Right cardiac atrium (tissue), 5 donors: ENCODE measurements at regions of chr15 and their contacts with region 1.

Region 1: GRCh38 chr15:40274350-40275274 is 8.3 kb downstream of the ANKRD63 start:
- DNase-seq: peak; percentile 77 to 92 (median 90)
- ATAC-seq: peak; percentile 15 to 47
- H3K4me3 ChIP-seq: no peak overlapping the region
- H3K27ac ChIP-seq: no peak overlapping the region
- H3K4me1 ChIP-seq: no peaks in the 10 kb centered on the region
- H3K27me3 ChIP-seq: no peaks in the 10 kb centered on the region

Region 2: DNA sequence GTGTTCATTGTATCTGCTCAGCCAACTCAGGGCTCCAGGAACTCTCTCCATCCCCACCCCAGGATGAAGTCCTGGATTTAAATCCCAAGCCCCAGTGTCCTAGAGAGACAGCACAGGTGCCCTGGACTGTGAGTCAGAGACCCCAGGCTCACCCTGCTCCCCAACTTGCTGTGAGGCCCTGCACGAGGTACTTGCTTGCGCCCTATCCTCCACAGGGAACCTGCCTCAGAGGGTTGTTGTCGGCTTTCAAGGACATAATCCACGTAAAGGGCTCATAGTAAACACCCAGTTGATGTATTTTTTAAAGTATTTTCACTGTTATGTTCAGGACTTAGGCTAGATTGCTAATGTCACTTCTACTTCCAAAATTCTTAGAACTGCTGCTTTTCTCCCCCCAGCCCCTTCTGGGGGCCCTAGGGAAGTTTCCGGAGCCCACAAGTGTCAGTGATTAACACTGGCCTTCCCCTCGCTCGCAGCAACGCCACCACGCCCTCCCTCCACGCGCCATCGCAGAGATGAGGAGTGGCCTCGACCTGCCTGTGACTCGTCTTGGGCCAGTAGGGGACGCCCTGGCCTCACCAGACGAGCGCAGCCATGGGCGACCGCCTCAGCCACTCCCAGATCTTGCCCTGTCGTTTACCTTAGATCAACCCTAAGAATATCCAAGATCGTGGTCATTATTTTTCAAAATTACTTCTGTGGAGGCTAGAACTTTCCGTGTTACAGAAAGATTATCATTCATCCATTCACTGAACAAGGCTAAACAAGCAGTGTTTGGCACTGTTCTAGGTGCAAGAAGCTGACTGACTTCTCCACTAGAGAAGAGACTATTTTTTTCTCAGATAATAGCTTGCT is 229.7 kb before region 1 on chr15:
- intact Hi-C with region 1: loop called (anchors 2 to 10 kb)
- DNase-seq: peak; percentile 91 to 96 (median 96)
- ATAC-seq: peak; percentile 91 to 95
- H3K4me3 ChIP-seq: no peak overlapping the region
- H3K27ac ChIP-seq: no peak overlapping the region
- H3K4me1 ChIP-seq: peaks cover 9% of the 10 kb centered on the region
- H3K27me3 ChIP-seq: no peaks in the 10 kb centered on the region

Region 3: GRCh38 chr15:40069178-40070165 is 205.1 kb before region 1 on chr15:
- intact Hi-C with region 1: no loop called
- DNase-seq: peak; percentile 93 to 98 (median 97)
- ATAC-seq: peak; percentile 94 to 95
- H3K4me3 ChIP-seq: no peak overlapping the region
- H3K27ac ChIP-seq: peak overlapping the region; percentile 28
- H3K4me1 ChIP-seq: peaks cover 6% of the 10 kb centered on the region
- H3K27me3 ChIP-seq: no peaks in the 10 kb centered on the region

Region 4: DNA sequence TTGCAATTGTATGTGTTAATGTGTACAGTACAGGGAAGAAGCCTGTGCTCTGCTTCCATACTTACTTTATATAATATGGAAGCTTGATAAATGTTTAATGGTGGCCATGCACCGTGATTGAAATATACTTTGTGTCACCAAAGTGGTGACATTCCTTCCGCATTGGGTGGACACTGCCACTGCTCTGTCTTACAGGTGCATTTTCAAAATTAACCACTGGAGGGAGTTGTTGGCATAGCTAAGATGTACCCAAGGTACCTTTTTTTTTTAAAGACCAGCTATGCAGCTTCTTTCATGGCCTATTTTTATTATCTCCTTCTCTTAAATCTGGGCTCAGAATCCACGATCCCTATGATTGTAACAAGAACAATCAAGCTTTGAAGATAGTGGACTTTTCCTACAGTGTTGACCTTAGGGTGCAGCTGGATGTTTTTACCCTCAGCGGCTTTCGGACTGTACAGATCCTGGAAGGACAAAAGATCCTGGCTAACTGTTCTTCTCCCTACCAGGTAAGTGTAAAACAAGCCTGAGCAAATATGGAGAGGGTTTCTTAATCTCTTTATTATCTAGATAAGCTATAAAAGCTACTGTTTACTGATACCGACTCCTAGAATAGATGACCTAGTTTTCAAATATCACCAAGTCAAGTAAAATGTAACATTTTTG is 57.3 kb before region 1 on chr15:
- intact Hi-C with region 1: loop called (anchors 1 to 2 kb)
- DNase-seq: no peak
- ATAC-seq: peak; percentile 88 to 90
- H3K4me3 ChIP-seq: no peak overlapping the region
- H3K27ac ChIP-seq: no peak overlapping the region
- H3K4me1 ChIP-seq: no peaks in the 10 kb centered on the region
- H3K27me3 ChIP-seq: no peaks in the 10 kb centered on the region

Region 5: DNA sequence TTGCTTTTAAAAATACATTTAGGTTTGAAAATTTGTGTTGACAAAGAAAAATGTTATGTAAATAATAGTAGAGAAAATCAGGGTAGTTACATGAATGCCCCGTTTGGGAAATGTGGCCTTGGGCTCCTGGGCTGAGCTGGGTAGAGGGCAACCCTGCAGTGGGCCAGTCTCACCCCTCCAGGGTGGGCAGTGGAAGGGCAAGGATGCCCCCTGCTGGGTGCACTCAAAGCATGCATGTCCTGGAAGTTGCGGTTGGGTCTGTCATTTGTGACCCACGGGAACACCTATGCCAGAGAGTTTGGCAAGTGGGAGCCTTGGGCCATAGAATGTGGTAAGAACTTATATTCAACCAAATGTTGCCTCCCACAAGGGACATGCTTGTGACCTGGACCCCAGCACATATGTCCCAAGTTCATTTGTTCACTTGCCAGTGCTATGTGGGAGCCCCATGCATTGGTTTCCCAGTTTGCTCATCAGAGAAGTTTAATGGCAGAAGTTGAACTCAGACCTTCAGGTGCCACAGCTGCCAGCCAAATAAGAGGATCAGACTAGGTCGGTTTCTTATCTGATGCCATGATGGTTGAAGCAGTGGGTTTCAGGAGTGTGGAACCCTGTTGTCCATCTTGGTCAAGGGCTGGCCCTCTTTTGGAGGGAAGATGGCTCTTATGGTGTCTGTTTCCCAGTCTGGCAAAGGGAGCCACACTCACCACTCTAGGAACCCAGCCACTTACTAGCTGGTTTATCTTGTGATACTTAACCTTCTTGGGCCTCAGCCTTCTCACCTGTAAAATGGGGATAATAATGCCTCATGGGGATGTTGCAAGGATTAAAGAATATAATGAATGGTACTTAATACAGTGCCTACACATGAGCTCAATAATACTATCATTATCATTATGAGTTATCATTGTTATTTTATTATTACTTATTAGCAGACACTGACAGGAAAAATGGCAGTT is 35.7 kb after region 1 on chr15:
- intact Hi-C with region 1: loop called in 3 of 4 experiments (anchors 2 to 5 kb)
- DNase-seq: peak; percentile 61 to 87 (median 82)
- ATAC-seq: peak; percentile 70
- H3K4me3 ChIP-seq: no peak overlapping the region
- H3K27ac ChIP-seq: no peak overlapping the region
- H3K4me1 ChIP-seq: no peaks in the 10 kb centered on the region
- H3K27me3 ChIP-seq: no peaks in the 10 kb centered on the region

Region 6: GRCh38 chr15:40354408-40355171 is 80.0 kb after region 1 on chr15:
- intact Hi-C with region 1: no loop called
- DNase-seq: peak in 1 of 3 donors; percentile 65
- ATAC-seq: peak in 1 of 2 donors; percentile 10
- H3K4me3 ChIP-seq: no peak overlapping the region
- H3K27ac ChIP-seq: no peak overlapping the region
- H3K4me1 ChIP-seq: no peaks in the 10 kb centered on the region
- H3K27me3 ChIP-seq: no peaks in the 10 kb centered on the region

Region 7: GRCh38 chr15:40421246-40422157 is 146.9 kb after region 1 on chr15:
- intact Hi-C with region 1: loop called in 2 of 4 experiments (anchors 2 to 5 kb)
- DNase-seq: peak; percentile 79 to 93 (median 93)
- ATAC-seq: peak; percentile 90 to 93
- H3K4me3 ChIP-seq: no peak overlapping the region
- H3K27ac ChIP-seq: peak overlapping the region; percentile 24
- H3K4me1 ChIP-seq: no peaks in the 10 kb centered on the region
- H3K27me3 ChIP-seq: no peaks in the 10 kb centered on the region